CD8-positive, alpha-beta T cell (primary cell): ENCODE measurements at regions of chr17 and their contacts with region 1.

Region 1: GRCh38 chr17:49851387-49852291 is 3.8 kb upstream of the TAC4 start:
- DNase-seq: peak; percentile 47 to 87 (median 76)
- ATAC-seq: peak; percentile 77
- H3K4me3 ChIP-seq: peak overlapping the region; percentile 73 to 83
- H3K4me3 Mint-ChIP-seq: peak overlapping the region; percentile 92
- H3K27ac ChIP-seq: peak overlapping the region; percentile 59 to 66
- H3K27ac Mint-ChIP-seq: peak overlapping the region; percentile 89
- H3K4me1 ChIP-seq: peaks cover 17% of the 10 kb centered on the region
- H3K4me1 Mint-ChIP-seq: peaks cover 15% of the 10 kb centered on the region
- H3K27me3 ChIP-seq: no peaks in the 10 kb centered on the region
- H3K27me3 Mint-ChIP-seq: no peaks in the 10 kb centered on the region
- CTCF ChIP-seq: peak; percentile 72

Region 2: GRCh38 chr17:49567871-49568694 is 283.6 kb before region 1 on chr17:
- CTCF ChIA-PET with region 1: interaction called, 6 read pairs
- POLR2A ChIA-PET with region 1: no interaction called
- intact Hi-C with region 1: loop called (anchors 1 kb)
- DNase-seq: peak; percentile 69 to 91 (median 82)
- ATAC-seq: peak; percentile 59
- H3K4me3 ChIP-seq: peak overlapping the region; percentile 6 to 25
- H3K4me3 Mint-ChIP-seq: peak overlapping the region; percentile 62
- H3K27ac ChIP-seq: no peak overlapping the region
- H3K27ac Mint-ChIP-seq: no peak overlapping the region
- H3K4me1 ChIP-seq: peaks cover 12% of the 10 kb centered on the region
- H3K4me1 Mint-ChIP-seq: peaks cover 8% of the 10 kb centered on the region
- H3K27me3 ChIP-seq: no peaks in the 10 kb centered on the region
- H3K27me3 Mint-ChIP-seq: peaks cover 12% of the 10 kb centered on the region
- CTCF ChIP-seq: peak; percentile 96

Region 3: GRCh38 chr17:49667854-49668253 is 183.8 kb before region 1 on chr17:
- CTCF ChIA-PET with region 1: no interaction called
- POLR2A ChIA-PET with region 1: no interaction called
- intact Hi-C with region 1: no loop called
- DNase-seq: peak in 1 of 9 experiments; percentile 40
- ATAC-seq: no peak
- H3K4me3 ChIP-seq: no peak overlapping the region
- H3K4me3 Mint-ChIP-seq: no peak overlapping the region
- H3K27ac ChIP-seq: no peak overlapping the region
- H3K27ac Mint-ChIP-seq: peak overlapping the region; percentile 49
- H3K4me1 ChIP-seq: peaks cover 37% of the 10 kb centered on the region
- H3K4me1 Mint-ChIP-seq: peaks cover 63% of the 10 kb centered on the region
- H3K27me3 ChIP-seq: no peaks in the 10 kb centered on the region
- H3K27me3 Mint-ChIP-seq: no peaks in the 10 kb centered on the region
- CTCF ChIP-seq: no peak

Region 4: DNA sequence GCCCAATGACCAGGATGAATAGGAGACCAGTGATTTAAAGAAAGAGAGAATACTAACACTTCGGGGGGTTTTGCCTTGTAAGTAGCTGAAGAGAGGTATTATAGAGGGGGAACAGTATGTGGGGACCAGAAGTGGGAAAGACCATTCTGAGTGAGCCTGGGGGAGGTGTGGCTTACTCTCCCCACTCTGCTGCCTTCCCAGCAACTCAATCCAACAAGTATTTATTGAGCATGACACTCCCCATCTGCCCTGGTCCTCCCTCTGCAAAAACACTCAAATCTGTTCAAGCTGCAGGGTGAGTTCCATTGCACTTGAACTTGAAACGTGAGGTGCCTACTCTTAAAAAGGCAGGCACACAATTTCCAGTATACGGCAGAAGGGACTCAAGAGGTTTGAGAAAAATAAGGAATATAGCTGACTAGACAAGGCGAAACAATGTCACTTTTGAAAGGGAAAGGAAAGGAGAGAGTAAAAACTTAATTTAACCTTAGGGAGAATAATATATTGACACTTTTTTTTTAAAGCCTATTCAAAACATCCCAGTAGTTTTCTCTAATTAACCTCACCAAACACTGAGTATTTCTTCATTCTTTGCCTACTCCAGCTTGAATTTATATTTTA is 95.9 kb before region 1 on chr17:
- CTCF ChIA-PET with region 1: no interaction called
- POLR2A ChIA-PET with region 1: no interaction called
- intact Hi-C with region 1: no loop called
- DNase-seq: no peak
- ATAC-seq: no peak
- H3K4me3 ChIP-seq: no peak overlapping the region
- H3K4me3 Mint-ChIP-seq: peak overlapping the region; percentile 45
- H3K27ac ChIP-seq: peak overlapping the region in 1 of 2 experiments; percentile 52
- H3K27ac Mint-ChIP-seq: peak overlapping the region; percentile 56
- H3K4me1 ChIP-seq: peaks cover 76% of the 10 kb centered on the region
- H3K4me1 Mint-ChIP-seq: peaks cover 79% of the 10 kb centered on the region
- H3K27me3 ChIP-seq: no peaks in the 10 kb centered on the region
- H3K27me3 Mint-ChIP-seq: no peaks in the 10 kb centered on the region
- CTCF ChIP-seq: no peak

Region 5: DNA sequence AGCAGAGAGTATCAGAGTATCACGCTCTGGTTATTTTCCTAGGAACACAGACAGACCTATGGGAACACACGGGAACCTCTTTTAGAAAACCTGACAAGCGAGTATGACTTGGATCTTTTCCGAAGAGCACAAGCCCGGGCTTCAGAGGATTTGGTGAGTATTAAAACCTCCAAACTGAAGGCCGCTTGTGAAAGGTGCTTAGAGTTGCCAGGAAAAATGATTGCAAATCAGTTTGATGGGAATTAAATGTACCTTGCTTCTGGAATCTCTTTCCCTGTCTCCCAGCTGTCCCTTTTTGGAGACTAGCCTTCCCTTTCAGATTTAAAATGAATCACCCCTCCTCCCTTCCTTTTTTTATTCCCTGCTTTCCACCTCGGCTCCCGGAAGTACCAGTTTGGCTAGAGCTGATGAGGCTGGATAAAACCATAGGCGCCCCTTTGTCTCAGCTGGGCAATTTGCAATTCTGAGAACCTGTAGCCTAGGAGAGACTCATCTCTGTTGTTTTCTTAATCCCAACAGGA is 35.8 kb before region 1 on chr17:
- CTCF ChIA-PET with region 1: no interaction called
- POLR2A ChIA-PET with region 1: no interaction called
- intact Hi-C with region 1: loop called in 1 of 2 experiments (anchors 5 kb)
- DNase-seq: no peak
- ATAC-seq: no peak
- H3K4me3 ChIP-seq: no peak overlapping the region
- H3K4me3 Mint-ChIP-seq: no peak overlapping the region
- H3K27ac ChIP-seq: peak overlapping the region in 1 of 2 experiments; percentile 6
- H3K27ac Mint-ChIP-seq: peak overlapping the region; percentile 32
- H3K4me1 ChIP-seq: peaks cover 66% of the 10 kb centered on the region
- H3K4me1 Mint-ChIP-seq: peaks cover 70% of the 10 kb centered on the region
- H3K27me3 ChIP-seq: no peaks in the 10 kb centered on the region
- H3K27me3 Mint-ChIP-seq: no peaks in the 10 kb centered on the region
- CTCF ChIP-seq: no peak

Region 6: GRCh38 chr17:50238601-50239280 is 387.1 kb after region 1 on chr17:
- CTCF ChIA-PET with region 1: no interaction called
- POLR2A ChIA-PET with region 1: no interaction called
- intact Hi-C with region 1: no loop called
- DNase-seq: no peak
- ATAC-seq: no peak
- H3K4me3 ChIP-seq: no peak overlapping the region
- H3K4me3 Mint-ChIP-seq: no peak overlapping the region
- H3K27ac ChIP-seq: no peak overlapping the region
- H3K27ac Mint-ChIP-seq: no peak overlapping the region
- H3K4me1 ChIP-seq: no peaks in the 10 kb centered on the region
- H3K4me1 Mint-ChIP-seq: no peaks in the 10 kb centered on the region
- H3K27me3 ChIP-seq: peaks cover 0 to 6% of the 10 kb centered on the region in 2 experiments
- H3K27me3 Mint-ChIP-seq: peaks cover 38% of the 10 kb centered on the region
- CTCF ChIP-seq: no peak

Region 7: GRCh38 chr17:50255766-50256635 is 404.4 kb after region 1 on chr17:
- CTCF ChIA-PET with region 1: no interaction called
- POLR2A ChIA-PET with region 1: no interaction called
- intact Hi-C with region 1: no loop called
- DNase-seq: no peak
- ATAC-seq: no peak
- H3K4me3 ChIP-seq: no peak overlapping the region
- H3K4me3 Mint-ChIP-seq: no peak overlapping the region
- H3K27ac ChIP-seq: no peak overlapping the region
- H3K27ac Mint-ChIP-seq: no peak overlapping the region
- H3K4me1 ChIP-seq: no peaks in the 10 kb centered on the region
- H3K4me1 Mint-ChIP-seq: no peaks in the 10 kb centered on the region
- H3K27me3 ChIP-seq: peaks cover 0 to 6% of the 10 kb centered on the region in 2 experiments
- H3K27me3 Mint-ChIP-seq: peaks cover 13% of the 10 kb centered on the region
- CTCF ChIP-seq: no peak